ENCODE measurements at regions of chr10 and their contacts with region 1.

Region 1: DNA sequence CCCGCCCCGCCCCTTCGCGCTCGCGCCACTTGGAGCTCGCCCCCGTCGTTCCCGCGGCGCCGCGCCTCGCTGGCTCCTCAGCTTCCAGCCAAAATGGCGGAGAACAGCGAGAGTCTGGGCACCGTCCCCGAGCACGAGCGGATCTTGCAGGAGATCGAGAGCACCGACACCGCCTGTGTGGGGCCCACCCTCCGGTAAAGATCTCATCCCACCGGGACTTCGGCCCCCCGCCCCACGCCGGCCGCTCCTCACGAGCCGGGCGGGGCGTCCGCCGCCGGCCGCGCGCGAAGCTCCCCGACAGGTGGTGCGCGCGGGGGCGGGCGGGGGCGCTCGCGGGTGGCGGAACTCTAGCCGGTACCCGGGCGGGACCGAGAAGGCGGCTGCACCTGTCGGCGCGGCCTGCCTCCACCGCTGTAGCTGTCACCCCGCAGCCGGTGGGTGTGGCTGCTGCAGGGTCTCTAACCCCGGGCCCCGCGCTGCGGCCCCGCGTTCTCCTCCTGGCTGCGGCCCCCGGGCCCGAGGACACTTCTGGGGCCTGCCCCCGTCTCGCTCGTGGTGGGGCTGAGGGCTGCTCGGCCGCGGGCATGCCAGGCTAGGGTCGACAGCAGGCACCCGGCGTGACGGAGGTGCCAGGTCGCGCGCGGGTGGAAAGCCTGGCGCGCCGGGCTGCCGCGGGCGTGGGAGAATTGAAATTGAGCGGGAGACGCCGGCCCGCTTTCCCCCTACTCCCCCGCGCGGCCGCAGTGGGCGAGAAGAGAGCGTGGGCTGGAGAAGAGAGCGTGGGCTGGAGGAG is at the start of gene EXOC6:
- DNase-seq: peak; percentile 87
- H3K4me3 Mint-ChIP-seq: peak within 1 kb of the TSS; percentile 80
- H3K27ac Mint-ChIP-seq: peak within 1 kb of the TSS; percentile 75
- H3K4me1 Mint-ChIP-seq: peaks cover 35% of the 10 kb centered on the region
- H3K27me3 Mint-ChIP-seq: no peaks in the 10 kb centered on the region
- total RNA-seq, gene EXOC6: 9.4 to 9.9 TPM

Region 2: DNA sequence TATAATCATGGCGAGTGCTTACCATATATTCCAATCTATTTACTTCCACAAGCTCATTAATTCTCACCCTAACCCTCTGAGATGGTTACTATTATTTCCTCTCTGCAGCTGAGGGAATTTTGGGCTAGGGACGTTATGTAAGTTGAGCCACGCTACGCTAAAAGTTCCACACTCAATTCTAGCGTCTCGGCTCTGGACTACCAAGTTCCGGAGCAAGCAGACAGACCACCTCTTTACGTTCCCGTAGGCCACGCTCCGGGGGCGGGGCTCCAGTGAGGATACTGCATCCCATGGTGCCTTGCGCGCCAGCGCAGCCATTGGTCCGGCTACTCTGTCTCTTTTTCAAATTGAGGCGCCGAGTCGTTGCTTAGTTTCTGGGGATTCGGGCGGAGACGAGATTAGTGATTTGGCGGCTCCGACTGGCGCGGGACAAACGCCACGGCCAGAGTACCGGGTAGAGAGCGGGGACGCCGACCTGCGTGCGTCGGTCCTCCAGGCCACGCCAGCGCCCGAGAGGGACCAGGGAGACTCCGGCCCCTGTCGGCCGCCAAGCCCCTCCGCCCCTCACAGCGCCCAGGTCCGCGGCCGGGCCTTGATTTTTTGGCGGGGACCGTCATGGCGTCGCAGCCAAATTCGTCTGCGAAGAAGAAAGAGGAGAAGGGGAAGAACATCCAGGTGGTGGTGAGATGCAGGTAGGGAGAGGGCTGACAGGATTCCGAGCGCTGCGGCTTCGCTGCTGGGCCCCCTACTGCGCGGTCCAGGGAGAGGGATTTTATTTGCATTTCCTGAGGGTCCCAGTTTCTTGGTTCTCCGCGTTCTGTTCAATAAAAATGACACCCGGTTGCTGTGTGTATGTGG is 255.6 kb before region 1 on chr10 and contains the start of gene KIF11:
- CTCF ChIA-PET with region 1: no interaction called
- POLR2A ChIA-PET with region 1: interaction called, 11 read pairs
- DNase-seq: peak; percentile 98
- H3K4me3 Mint-ChIP-seq: peak within 1 kb of the TSS; percentile 96
- H3K27ac Mint-ChIP-seq: peak within 1 kb of the TSS; percentile 100
- H3K4me1 Mint-ChIP-seq: peaks cover 50% of the 10 kb centered on the region
- H3K27me3 Mint-ChIP-seq: no peaks in the 10 kb centered on the region
- total RNA-seq, gene KIF11: 78.5 to 79.5 TPM

Region 3: GRCh38 chr10:92662848-92663247 is 185.8 kb before region 1 on chr10:
- CTCF ChIA-PET with region 1: no interaction called
- POLR2A ChIA-PET with region 1: no interaction called
- DNase-seq: no peak
- H3K4me3 Mint-ChIP-seq: no peak overlapping the region
- H3K27ac Mint-ChIP-seq: no peak overlapping the region
- H3K4me1 Mint-ChIP-seq: no peaks in the 10 kb centered on the region
- H3K27me3 Mint-ChIP-seq: peaks cover 1% of the 10 kb centered on the region

Region 4: GRCh38 chr10:92689663-92690210 is 158.9 kb before region 1 on chr10 and contains the start of gene HHEX:
- CTCF ChIA-PET with region 1: no interaction called
- POLR2A ChIA-PET with region 1: interaction called, 17 read pairs
- DNase-seq: peak; percentile 34
- H3K4me3 Mint-ChIP-seq: peak within 1 kb of the TSS; percentile 57
- H3K27ac Mint-ChIP-seq: no peak within 1 kb of the TSS
- H3K4me1 Mint-ChIP-seq: peaks cover 23% of the 10 kb centered on the region
- H3K27me3 Mint-ChIP-seq: peaks cover 75% of the 10 kb centered on the region
- total RNA-seq, gene HHEX: 0.13 to 0.23 TPM

Region 5: DNA sequence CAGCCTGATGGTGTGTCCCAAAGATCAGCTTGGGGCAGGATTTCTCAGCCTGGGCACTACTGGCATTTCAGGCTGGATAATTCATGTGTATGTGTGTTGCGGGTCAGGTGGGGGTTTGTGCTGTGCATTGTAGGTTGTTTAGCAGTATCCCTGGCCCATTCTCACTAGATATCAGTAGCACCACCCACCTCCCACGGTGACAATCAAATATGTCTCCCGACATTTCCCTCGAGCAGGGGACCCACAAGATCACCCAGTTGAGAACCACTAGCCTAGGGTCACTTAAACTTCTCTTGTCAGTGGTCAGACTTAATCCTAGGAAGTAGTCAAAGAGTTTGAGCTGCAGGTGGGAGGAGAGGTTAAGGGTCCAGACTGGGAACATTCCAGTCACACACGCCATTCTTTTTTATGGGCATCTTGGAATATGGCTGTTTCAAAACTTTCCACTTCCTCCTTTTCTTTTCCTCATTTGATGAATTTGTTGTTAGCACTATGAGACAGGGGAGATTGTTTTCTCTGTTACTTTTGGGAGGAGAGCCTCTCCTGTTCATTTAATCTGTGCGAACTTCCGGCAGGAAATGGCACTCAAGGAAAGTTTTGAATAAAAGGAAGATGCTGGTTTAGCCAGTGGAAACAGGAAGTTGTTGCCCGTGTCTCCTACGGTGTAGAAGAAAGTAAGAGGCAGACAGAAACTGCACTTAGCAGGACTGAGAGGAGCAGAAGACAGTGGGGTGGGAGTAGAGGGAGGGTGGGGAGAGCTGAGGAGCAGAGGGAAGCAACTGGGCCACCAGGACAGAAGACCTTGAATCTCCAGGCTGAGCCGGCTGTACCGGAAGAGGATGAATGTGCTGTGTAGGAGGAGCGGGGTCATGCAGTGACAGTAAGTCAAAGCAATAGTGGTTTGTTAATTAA is 17.9 kb before region 1 on chr10:
- CTCF ChIA-PET with region 1: interaction called, 99 read pairs
- POLR2A ChIA-PET with region 1: interaction called, 4 read pairs
- DNase-seq: peak; percentile 30
- H3K4me3 Mint-ChIP-seq: peak overlapping the region; percentile 60
- H3K27ac Mint-ChIP-seq: peak overlapping the region; percentile 58
- H3K4me1 Mint-ChIP-seq: peaks cover 13% of the 10 kb centered on the region
- H3K27me3 Mint-ChIP-seq: peaks cover 2% of the 10 kb centered on the region

Region 6: DNA sequence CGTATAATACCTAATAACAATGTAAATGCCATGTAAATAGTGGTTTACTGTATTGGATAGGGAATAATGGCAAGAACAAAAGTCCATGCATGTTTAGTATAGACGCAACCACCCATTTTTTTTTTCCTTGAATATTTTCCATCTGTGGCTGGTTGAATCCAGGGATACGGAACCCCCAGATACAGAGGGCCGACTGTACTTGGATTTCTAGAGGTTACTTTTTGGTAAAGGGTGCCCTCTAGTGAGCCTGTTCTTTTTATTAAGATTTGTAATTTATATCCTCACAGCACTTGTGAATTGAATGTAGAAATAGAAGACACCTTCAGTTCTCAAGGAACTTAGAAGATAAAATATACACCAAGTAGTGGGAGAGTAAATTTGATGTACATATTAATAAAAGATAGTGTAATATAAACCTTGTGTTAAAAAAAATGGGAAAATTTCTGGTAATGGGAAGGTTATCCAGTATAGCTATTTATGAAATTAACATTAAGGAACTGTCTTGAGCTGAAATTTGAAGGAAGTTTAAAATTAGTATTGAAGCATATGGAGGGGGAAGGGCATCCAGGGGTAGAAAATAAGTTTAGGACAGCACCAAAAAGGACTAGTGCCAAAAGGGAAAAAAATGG is 31.7 kb after region 1 on chr10:
- CTCF ChIA-PET with region 1: interaction called, 13 read pairs
- POLR2A ChIA-PET with region 1: interaction called, 5 read pairs
- DNase-seq: no peak
- H3K4me3 Mint-ChIP-seq: no peak overlapping the region
- H3K27ac Mint-ChIP-seq: no peak overlapping the region
- H3K4me1 Mint-ChIP-seq: peaks cover 11% of the 10 kb centered on the region
- H3K27me3 Mint-ChIP-seq: no peaks in the 10 kb centered on the region